Heart right ventricle (tissue), 16 donors: ENCODE measurements at regions of chr6 and their contacts with region 1.

Region 1: DNA sequence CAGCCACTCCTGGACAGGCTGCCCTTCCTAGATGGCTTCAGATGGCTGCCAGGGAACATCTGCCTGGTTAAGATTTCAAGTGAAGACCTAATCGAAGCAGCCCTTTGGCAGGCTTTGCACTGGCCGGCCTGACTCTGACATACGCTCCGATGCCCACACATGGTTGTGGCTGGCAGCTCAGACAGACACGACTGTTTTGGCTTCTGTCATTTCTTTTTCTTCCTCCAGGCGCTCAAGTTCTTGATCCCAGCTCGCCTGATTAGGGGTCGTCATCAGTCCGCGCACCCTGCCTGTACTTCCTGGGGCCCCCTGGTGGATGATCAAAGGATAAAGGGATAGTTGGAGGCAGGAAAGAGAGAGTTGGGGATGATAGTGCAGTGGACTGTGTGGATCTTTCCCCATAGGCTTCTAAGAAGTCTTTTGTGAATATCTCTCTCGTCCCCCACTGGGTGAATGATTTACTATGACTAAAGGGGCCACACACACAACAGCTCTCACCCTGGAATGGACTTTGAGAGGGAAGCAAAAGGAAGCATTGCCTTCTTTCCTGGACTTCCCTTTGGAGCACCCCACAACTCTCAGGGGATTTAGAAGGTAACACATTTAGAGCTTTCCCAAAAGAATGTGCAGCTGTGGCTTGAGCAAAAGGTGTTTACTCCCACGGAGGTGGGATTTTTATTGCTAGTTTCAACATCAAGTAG is 21.4 kb upstream of the TRAM2 start:
- DNase-seq: peak; percentile 36 to 76
- ATAC-seq: peak; percentile 17 to 78 (median 72)
- H3K4me3 ChIP-seq: peak overlapping the region in 6 of 10 donors; percentile 28 to 41 (median 35)
- H3K27ac ChIP-seq: peak overlapping the region in 6 of 10 donors; percentile 20 to 63 (median 39)
- H3K4me1 ChIP-seq: peaks cover 7 to 48% (median 26%) of the 10 kb centered on the region in 9 donors
- H3K27me3 ChIP-seq: no peaks in the 10 kb centered on the region
- CTCF ChIP-seq: peak; percentile 56 to 78 (median 71)

Region 2: GRCh38 chr6:52284460-52285176 is 313.7 kb before region 1 on chr6 and contains the start of gene MCM3:
- intact Hi-C with region 1: loop called in 1 of 10 experiments (anchors 10 kb)
- DNase-seq: peak; percentile 94 to 99
- ATAC-seq: peak; percentile 100
- H3K4me3 ChIP-seq: peak within 1 kb of the TSS; percentile 66 to 98 (median 79)
- H3K27ac ChIP-seq: peak within 1 kb of the TSS in 9 of 10 donors; percentile 56 to 79 (median 64)
- H3K4me1 ChIP-seq: peaks cover 0 to 31% (median 14%) of the 10 kb centered on the region in 9 donors
- H3K27me3 ChIP-seq: no peaks in the 10 kb centered on the region
- CTCF ChIP-seq: peak in 3 of 9 donors; percentile 4 to 25 (median 22)
- total RNA-seq, gene MCM3: 18.0 to 28.5 (median 25.9) TPM

Region 3: GRCh38 chr6:52419809-52420670 is 178.2 kb before region 1 on chr6 and contains the start of gene EFHC1:
- intact Hi-C with region 1: loop called in 7 of 10 experiments (anchors 1 to 5 kb)
- DNase-seq: peak; percentile 98 to 99
- ATAC-seq: peak; percentile 96 to 98 (median 97)
- H3K4me3 ChIP-seq: peak within 1 kb of the TSS; percentile 60 to 91 (median 80)
- H3K27ac ChIP-seq: peak within 1 kb of the TSS; percentile 52 to 94 (median 87)
- H3K4me1 ChIP-seq: peaks cover 0 to 62% (median 23%) of the 10 kb centered on the region in 9 donors
- H3K27me3 ChIP-seq: no peaks in the 10 kb centered on the region
- CTCF ChIP-seq: peak in 1 of 9 donors; percentile 3
- total RNA-seq, gene EFHC1: 3.3 to 7.6 (median 5.8) TPM

Region 4: GRCh38 chr6:52503848-52504781 is 94.2 kb before region 1 on chr6:
- intact Hi-C with region 1: loop called in 2 of 10 experiments (anchors 5 kb)
- DNase-seq: peak; percentile 88 to 91
- ATAC-seq: peak; percentile 79 to 92 (median 88)
- H3K4me3 ChIP-seq: peak overlapping the region in 1 of 10 donors; percentile 4
- H3K27ac ChIP-seq: peak overlapping the region; percentile 50 to 91 (median 80)
- H3K4me1 ChIP-seq: peaks cover 19 to 79% (median 48%) of the 10 kb centered on the region in 9 donors
- H3K27me3 ChIP-seq: no peaks in the 10 kb centered on the region
- CTCF ChIP-seq: no peak

Region 5: GRCh38 chr6:52617087-52617486 is 18.8 kb after region 1 on chr6:
- intact Hi-C with region 1: no loop called
- DNase-seq: no peak
- ATAC-seq: no peak
- H3K4me3 ChIP-seq: no peak overlapping the region
- H3K27ac ChIP-seq: no peak overlapping the region
- H3K4me1 ChIP-seq: peaks cover 0 to 5% (median 0%) of the 10 kb centered on the region in 9 donors
- H3K27me3 ChIP-seq: no peaks in the 10 kb centered on the region
- CTCF ChIP-seq: no peak

Region 6: GRCh38 chr6:52664186-52664990 is 66.1 kb after region 1 on chr6:
- intact Hi-C with region 1: loop called in 6 of 10 experiments (anchors 5 to 10 kb)
- DNase-seq: peak; percentile 91 to 92
- ATAC-seq: peak; percentile 97 to 99 (median 99)
- H3K4me3 ChIP-seq: peak overlapping the region; percentile 24 to 83 (median 71)
- H3K27ac ChIP-seq: peak overlapping the region in 9 of 10 donors; percentile 43 to 80 (median 74)
- H3K4me1 ChIP-seq: peaks cover 0 to 21% (median 8%) of the 10 kb centered on the region in 9 donors
- H3K27me3 ChIP-seq: peaks cover 0 to 19% (median 0%) of the 10 kb centered on the region in 7 donors
- CTCF ChIP-seq: no peak